Gastrocnemius medialis (tissue), 4 donors: ENCODE measurements at regions of chrX and their contacts with region 1.

Region 1: GRCh38 chrX:85003655-85004244 is at the start of gene APOOL:
- DNase-seq: peak; percentile 74 to 86
- ATAC-seq: peak; percentile 95 to 96
- H3K4me3 ChIP-seq: peak within 1 kb of the TSS; percentile 67 to 75 (median 70)
- H3K27ac ChIP-seq: peak within 1 kb of the TSS; percentile 76 to 84 (median 80)
- H3K4me1 ChIP-seq: peaks cover 0 to 7% of the 10 kb centered on the region in 2 donors
- H3K27me3 ChIP-seq: no peaks in the 10 kb centered on the region
- CTCF ChIP-seq: no peak
- POLR2A ChIP-seq: no peak
- total RNA-seq, gene APOOL: 15.0 to 29.7 (median 23.8) TPM

Region 2: DNA sequence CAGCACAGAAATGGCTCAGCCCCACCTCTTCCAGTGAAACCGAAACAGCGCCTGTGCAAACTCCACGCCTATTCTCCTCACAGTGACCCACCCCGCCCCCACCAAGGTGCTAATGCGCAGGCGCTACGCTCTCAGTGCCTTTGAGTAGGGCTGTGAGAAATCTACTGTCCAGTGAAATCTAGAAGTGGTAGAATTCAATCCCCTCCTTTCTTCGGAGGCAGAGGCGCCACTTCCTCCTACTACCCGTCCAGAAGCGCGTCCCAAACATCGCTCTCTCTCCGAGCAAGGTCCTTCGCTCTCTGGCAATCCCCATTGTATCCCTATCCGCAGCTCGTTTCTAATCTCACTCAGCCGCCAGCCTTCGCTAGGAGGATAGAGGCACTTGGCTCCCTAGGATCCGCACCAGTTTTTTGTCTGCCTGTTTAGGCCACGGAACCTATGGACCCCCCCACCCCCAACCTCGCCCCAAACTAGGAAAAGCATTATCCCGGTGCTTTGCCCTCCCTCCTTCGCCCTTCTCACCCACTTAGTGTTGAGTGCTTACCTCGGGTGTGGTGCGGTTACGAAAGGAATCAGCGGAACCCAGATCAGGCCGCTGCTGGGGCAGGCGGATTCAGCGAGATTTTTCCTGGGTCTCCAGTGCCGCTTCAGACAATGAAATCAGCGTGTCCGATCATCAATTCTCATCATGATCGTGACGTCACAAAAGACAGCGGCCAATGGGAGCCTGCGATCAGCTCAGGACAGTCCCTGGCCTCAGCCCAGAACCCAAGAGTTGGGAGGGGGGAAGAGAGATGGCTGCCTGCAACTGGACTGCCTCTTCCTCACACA is 501.7 kb before region 1 on chrX and contains the start of gene HDX:
- in situ Hi-C with region 1: no loop called
- intact Hi-C with region 1: loop called (anchors 5 kb)
- DNase-seq: peak; percentile 37 to 72
- ATAC-seq: peak; percentile 66 to 90
- H3K4me3 ChIP-seq: peak within 1 kb of the TSS; percentile 54 to 61 (median 59)
- H3K27ac ChIP-seq: peak within 1 kb of the TSS; percentile 74 to 81 (median 79)
- H3K4me1 ChIP-seq: no peaks in the 10 kb centered on the region
- H3K27me3 ChIP-seq: no peaks in the 10 kb centered on the region
- CTCF ChIP-seq: no peak
- POLR2A ChIP-seq: peak; percentile 16 to 21
- total RNA-seq, gene HDX: 0.59 to 1.9 (median 1.1) TPM in 3 of 4 donors, not detected in the other